Activated CD4-positive, alpha-beta T cell treated with anti-CD3 and anti-CD28 coated beads for 36 hours (primary cell): ENCODE measurements at regions of chr14 and their contacts with region 1.

Region 1: GRCh38 chr14:49852301-49853157 is at the start of gene NEMF:
- DNase-seq: peak; percentile 86
- ATAC-seq: peak; percentile 79
- H3K4me3 Mint-ChIP-seq: peak within 1 kb of the TSS; percentile 97
- H3K27ac Mint-ChIP-seq: peak within 1 kb of the TSS; percentile 98
- H3K4me1 Mint-ChIP-seq: peaks cover 39% of the 10 kb centered on the region
- H3K27me3 Mint-ChIP-seq: no peaks in the 10 kb centered on the region
- total RNA-seq, gene NEMF: 62.4 to 97.9 TPM

Region 2: GRCh38 chr14:49585803-49586672 is 266.5 kb before region 1 on chr14 and contains the start of gene RPS29:
- CTCF ChIA-PET with region 1: no interaction called
- POLR2A ChIA-PET with region 1: interaction called, 8 read pairs
- intact Hi-C with region 1: loop called in 1 of 2 experiments (anchors 1 kb)
- DNase-seq: peak; percentile 99
- ATAC-seq: peak; percentile 84
- H3K4me3 Mint-ChIP-seq: peak within 1 kb of the TSS; percentile 92
- H3K27ac Mint-ChIP-seq: peak within 1 kb of the TSS; percentile 96
- H3K4me1 Mint-ChIP-seq: peaks cover 40% of the 10 kb centered on the region
- H3K27me3 Mint-ChIP-seq: no peaks in the 10 kb centered on the region
- total RNA-seq, gene RPS29: 481 to 1,987 TPM

Region 3: DNA sequence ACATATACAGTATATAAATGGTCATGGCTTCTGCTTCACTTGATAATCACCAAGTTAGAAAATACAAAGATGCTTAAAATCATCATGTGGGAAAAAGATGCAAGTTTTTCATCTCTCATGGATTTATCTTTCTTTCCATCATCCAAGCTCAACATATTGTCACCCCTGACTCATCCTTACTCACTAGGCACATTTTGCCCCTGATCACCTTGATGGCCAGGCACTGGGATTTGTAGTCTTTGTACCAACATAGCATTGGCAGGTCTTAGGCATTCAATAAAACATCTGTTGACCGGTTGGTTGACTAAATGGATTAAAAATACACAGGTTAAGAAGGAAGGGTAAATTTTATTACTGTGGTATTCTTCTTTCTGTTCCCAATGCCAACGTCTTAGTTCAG is 56.5 kb before region 1 on chr14:
- CTCF ChIA-PET with region 1: interaction called, 5 read pairs
- POLR2A ChIA-PET with region 1: interaction called, 10 read pairs
- intact Hi-C with region 1: no loop called
- DNase-seq: no peak
- ATAC-seq: no peak
- H3K4me3 Mint-ChIP-seq: no peak overlapping the region
- H3K27ac Mint-ChIP-seq: peak overlapping the region; percentile 24
- H3K4me1 Mint-ChIP-seq: peaks cover 8% of the 10 kb centered on the region
- H3K27me3 Mint-ChIP-seq: no peaks in the 10 kb centered on the region

Region 4: DNA sequence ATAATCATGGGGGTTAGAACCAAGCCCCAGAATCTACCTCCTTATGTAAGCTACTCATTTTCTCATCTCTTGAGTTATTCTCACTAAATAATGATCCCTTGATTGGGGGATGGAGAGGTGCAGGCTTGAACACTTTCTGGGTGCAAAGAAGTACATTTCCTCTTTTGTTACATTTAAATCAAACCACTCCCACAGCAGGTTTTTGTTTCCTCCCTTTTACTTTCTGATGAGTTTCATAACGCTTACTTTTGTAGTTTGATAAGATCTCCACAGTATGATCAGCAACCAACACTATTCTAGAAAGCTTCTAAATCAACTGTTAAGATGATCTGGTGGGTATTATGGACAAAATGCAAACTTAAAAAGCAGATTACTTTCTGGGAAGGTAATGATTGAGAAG is 243.4 kb after region 1 on chr14:
- CTCF ChIA-PET with region 1: interaction called, 13 read pairs
- POLR2A ChIA-PET with region 1: no interaction called
- intact Hi-C with region 1: no loop called
- DNase-seq: no peak
- ATAC-seq: peak; percentile 66
- H3K4me3 Mint-ChIP-seq: peak overlapping the region; percentile 45
- H3K27ac Mint-ChIP-seq: peak overlapping the region; percentile 80
- H3K4me1 Mint-ChIP-seq: peaks cover 73% of the 10 kb centered on the region
- H3K27me3 Mint-ChIP-seq: no peaks in the 10 kb centered on the region

Region 5: DNA sequence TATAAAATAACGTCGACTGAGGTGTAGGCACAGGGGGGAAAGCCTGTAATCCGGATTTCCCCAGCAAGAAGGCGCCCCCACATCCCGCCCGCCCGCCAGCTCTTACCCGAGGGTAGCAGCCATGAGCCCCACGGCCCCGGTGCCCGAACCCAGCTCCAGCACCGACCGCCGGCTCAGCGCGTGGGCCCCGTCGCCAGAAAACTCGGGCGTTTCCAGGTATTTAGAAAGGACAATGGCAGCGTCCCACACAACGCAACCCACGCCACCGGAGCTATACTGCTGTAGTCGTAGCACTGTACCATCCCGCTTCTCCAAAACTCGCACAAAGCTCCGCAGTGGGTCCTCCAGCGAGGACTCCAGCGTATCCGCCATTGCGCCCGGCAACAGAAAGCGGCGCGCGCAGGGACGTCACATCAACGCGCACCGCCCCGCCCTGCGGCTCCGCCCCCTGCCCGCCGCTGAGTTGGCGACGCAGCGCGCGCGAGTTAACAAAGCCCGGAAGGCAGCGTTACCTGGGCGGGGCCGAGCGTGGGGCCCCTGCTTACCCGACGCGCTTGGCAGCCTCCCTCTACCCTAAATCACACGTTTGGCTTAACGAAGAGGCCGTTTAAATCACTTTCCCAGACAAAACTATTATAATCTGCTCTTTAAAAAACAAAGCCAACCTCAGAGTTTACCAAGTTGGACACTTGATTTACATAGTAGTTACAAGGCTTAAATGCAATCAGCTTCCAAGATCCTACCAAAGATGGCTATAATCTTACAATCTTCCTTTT is 263.8 kb after region 1 on chr14 and contains the start of gene VCPKMT:
- CTCF ChIA-PET with region 1: interaction called, 11 read pairs
- POLR2A ChIA-PET with region 1: no interaction called
- intact Hi-C with region 1: loop called in 1 of 2 experiments (anchors 1 kb)
- DNase-seq: peak; percentile 98
- ATAC-seq: peak; percentile 99
- H3K4me3 Mint-ChIP-seq: peak within 1 kb of the TSS; percentile 95
- H3K27ac Mint-ChIP-seq: peak within 1 kb of the TSS; percentile 97
- H3K4me1 Mint-ChIP-seq: peaks cover 25% of the 10 kb centered on the region
- H3K27me3 Mint-ChIP-seq: no peaks in the 10 kb centered on the region
- total RNA-seq, gene VCPKMT: 6.6 to 10.4 TPM

Region 6: GRCh38 chr14:50532502-50533240 is 680.1 kb after region 1 on chr14 and contains the start of gene MAP4K5:
- CTCF ChIA-PET with region 1: no interaction called
- POLR2A ChIA-PET with region 1: no interaction called
- intact Hi-C with region 1: loop called (anchors 1 to 5 kb)
- DNase-seq: peak; percentile 94
- ATAC-seq: peak; percentile 96
- H3K4me3 Mint-ChIP-seq: peak within 1 kb of the TSS; percentile 90
- H3K27ac Mint-ChIP-seq: peak within 1 kb of the TSS; percentile 86
- H3K4me1 Mint-ChIP-seq: peaks cover 47% of the 10 kb centered on the region
- H3K27me3 Mint-ChIP-seq: no peaks in the 10 kb centered on the region
- total RNA-seq, gene MAP4K5: 19.1 to 31.2 TPM